ENCODE measurements at regions of chr13 and their contacts with region 1.

Region 1: GRCh38 chr13:99916366-99917103 is 55.0 kb downstream of the ZIC5 start:
- DNase-seq: peak in 2 of 4 donors; percentile 34 to 61
- ATAC-seq: peak; percentile 97
- H3K4me3 ChIP-seq: no peak overlapping the region
- H3K27ac ChIP-seq: no peak overlapping the region
- H3K4me1 ChIP-seq: no peaks in the 10 kb centered on the region
- H3K27me3 ChIP-seq: peaks cover 0 to 48% of the 10 kb centered on the region in 2 donors
- CTCF ChIP-seq: peak; percentile 76 to 86

Region 2: DNA sequence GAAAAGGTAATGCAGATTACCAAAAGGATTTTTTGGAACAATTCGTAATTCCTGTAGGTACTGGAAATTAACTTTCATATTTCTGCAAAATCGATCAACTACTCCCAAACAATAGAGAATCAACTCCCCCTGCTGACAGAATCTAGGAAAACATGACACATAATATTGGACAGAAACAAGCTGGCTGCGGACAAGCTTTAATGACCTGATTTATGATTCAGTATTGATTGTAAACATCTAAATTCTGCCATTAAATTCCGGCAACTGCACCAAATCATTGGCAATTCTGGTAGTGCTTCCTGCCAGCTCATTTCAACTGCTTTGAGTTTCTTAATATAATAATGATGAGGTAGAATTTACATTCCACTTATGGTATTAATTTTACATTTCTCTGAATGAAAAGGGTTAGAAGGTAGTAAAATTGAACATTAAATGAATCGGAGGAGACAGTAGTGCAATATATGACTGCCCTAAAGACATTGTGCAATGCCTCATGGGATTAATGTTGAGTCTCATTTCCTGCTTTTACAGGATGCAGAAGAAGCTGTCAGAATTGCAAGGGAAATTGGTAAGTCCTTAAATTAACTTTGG is 318.9 kb after region 1 on chr13:
- intact Hi-C with region 1: loop called in 1 of 2 experiments (anchors 10 kb)
- DNase-seq: peak in 2 of 4 donors; percentile 23 to 51
- ATAC-seq: peak; percentile 47
- H3K4me3 ChIP-seq: no peak overlapping the region
- H3K27ac ChIP-seq: no peak overlapping the region
- H3K4me1 ChIP-seq: peaks cover 0 to 17% of the 10 kb centered on the region in 2 donors
- H3K27me3 ChIP-seq: no peaks in the 10 kb centered on the region
- CTCF ChIP-seq: peak; percentile 34 to 47

Region 3: GRCh38 chr13:100514788-100515409 is 598.4 kb after region 1 on chr13:
- intact Hi-C with region 1: loop called in 1 of 2 experiments (anchors 10 kb)
- DNase-seq: peak; percentile 80 to 88 (median 84)
- ATAC-seq: peak; percentile 98
- H3K4me3 ChIP-seq: no peak overlapping the region
- H3K27ac ChIP-seq: no peak overlapping the region
- H3K4me1 ChIP-seq: peaks cover 0 to 18% of the 10 kb centered on the region in 2 donors
- H3K27me3 ChIP-seq: no peaks in the 10 kb centered on the region
- CTCF ChIP-seq: peak; percentile 89 to 91